GM13977 (cell line): ENCODE measurements at regions of chr1 and their contacts with region 1.

Region 1: DNA sequence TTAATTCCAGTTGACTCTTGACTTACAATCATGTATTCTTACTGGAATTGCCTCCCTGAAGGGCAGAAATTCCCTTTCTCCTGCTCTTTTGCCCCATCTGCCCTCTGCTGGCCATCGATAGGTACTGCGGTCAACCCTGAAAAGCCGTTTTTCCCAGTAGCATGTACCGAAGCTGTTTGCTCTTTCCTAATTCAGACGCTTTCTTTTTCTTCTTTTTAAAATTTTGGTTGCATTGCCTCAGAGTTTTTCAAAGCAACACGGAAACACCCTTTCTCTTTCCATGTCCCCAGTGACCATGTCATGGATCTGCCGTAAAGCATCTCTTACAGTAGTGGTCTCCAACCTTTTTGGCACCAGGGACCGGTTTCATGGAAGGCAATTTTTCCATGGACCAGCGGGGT is 164.2 kb upstream of the C1orf21 start:
- DNase-seq: peak; percentile 67
- CTCF ChIP-seq: peak; percentile 90

Region 2: DNA sequence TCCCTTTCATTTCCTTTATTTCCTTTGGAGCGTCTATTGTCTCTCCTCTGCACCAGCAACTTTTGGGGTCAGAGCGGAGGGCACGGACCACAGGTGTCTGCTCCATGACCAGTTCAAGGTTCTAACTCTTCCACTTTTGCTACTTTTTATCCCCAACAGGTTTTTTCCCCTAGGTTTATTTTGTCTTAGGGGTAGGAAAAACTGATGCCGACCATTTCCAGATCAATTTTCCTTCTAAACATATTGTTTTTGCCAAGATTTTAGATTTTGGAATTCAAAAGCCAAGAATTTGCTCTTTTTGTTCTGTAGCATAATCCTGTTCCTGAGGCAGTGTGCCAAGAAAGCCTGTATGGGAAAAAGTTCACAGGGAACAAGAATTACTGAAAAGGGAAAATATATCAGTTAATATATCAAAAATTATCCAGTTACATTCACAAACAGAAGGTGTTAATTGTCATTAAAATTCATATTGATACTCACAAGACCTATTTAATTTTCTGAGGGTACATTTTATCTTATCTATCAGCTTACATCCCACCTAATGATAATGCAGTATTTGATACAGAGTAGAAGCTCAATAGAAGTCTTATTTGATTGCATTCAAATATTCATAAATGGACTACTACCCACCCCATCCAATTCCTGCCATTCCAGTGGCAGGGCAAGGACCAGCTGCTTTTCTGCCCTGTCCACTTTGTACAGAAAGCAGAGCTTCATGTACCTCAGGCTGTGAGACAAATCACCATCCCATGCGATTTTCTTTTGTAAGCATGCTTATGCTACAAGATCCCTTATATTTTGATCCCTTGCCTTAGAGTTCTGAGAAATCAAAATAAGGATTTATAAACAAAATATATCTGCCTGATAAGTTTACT is 139.9 kb before region 1 on chr1:
- in situ Hi-C with region 1: loop called (anchors 10 kb)
- DNase-seq: no peak
- CTCF ChIP-seq: no peak